PC-3 (cell line): ENCODE measurements at regions of chr3 and their contacts with region 1.

Region 1: DNA sequence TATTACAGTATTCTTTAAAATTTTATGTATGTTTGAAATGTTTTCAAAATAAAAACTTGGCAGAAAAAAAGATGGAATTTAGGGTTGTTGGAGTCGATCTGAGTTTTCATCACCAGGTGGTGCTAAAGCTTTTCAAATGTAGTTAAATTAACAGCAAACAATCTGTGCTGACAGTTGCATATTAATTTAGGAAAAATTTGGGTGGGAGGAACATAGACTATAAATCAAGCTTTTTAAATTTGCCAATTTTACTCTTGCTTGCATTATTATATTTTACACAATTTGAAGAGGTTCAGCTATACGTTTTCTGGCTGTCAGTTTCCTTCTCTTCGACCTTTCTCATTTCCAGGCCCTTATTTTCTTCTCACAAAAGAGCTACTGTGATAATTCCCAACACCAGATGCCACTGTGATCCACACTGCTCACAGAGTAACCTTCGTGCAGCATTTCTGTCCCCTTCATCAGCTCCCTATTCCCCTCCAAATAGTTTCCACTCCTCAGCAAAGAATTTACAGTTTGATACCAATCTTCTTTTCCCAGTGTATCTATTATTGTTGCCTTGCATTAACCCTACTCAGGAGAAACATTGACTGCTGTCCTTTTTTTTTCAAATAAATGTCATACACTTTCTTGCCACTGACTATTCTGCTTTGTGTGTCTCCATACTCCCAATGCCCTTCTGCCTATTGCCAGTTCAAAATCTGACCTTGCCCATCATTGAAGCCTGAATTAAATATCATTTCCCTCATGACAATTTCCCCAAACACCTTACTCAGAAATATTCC is 53.4 kb upstream of the EIF5A2 start:
- DNase-seq: peak; percentile 74
- ATAC-seq: peak; percentile 55
- H3K4me3 ChIP-seq: no peak overlapping the region
- H3K27ac ChIP-seq: no peak overlapping the region
- H3K4me1 ChIP-seq: no peaks in the 10 kb centered on the region
- H3K27me3 ChIP-seq: no peaks in the 10 kb centered on the region
- CTCF ChIP-seq: peak; percentile 91

Region 2: GRCh38 chr3:170726976-170727661 is 234.7 kb before region 1 on chr3:
- CTCF ChIA-PET with region 1: no interaction called
- POLR2A ChIA-PET with region 1: no interaction called
- intact Hi-C with region 1: no loop called
- DNase-seq: peak; percentile 84
- ATAC-seq: peak; percentile 78
- H3K4me3 ChIP-seq: peak overlapping the region; percentile 47
- H3K27ac ChIP-seq: peak overlapping the region; percentile 89
- H3K4me1 ChIP-seq: peaks cover 28% of the 10 kb centered on the region
- H3K27me3 ChIP-seq: no peaks in the 10 kb centered on the region
- CTCF ChIP-seq: no peak

Region 3: GRCh38 chr3:170941551-170941950 is 20.3 kb before region 1 on chr3:
- CTCF ChIA-PET with region 1: no interaction called
- POLR2A ChIA-PET with region 1: no interaction called
- intact Hi-C with region 1: no loop called
- DNase-seq: peak; percentile 50
- ATAC-seq: peak; percentile 93
- H3K4me3 ChIP-seq: no peak overlapping the region
- H3K27ac ChIP-seq: no peak overlapping the region
- H3K4me1 ChIP-seq: peaks cover 6% of the 10 kb centered on the region; the same call in 1 of the 2 replicates
- H3K27me3 ChIP-seq: no peaks in the 10 kb centered on the region
- CTCF ChIP-seq: no peak

Region 4: DNA sequence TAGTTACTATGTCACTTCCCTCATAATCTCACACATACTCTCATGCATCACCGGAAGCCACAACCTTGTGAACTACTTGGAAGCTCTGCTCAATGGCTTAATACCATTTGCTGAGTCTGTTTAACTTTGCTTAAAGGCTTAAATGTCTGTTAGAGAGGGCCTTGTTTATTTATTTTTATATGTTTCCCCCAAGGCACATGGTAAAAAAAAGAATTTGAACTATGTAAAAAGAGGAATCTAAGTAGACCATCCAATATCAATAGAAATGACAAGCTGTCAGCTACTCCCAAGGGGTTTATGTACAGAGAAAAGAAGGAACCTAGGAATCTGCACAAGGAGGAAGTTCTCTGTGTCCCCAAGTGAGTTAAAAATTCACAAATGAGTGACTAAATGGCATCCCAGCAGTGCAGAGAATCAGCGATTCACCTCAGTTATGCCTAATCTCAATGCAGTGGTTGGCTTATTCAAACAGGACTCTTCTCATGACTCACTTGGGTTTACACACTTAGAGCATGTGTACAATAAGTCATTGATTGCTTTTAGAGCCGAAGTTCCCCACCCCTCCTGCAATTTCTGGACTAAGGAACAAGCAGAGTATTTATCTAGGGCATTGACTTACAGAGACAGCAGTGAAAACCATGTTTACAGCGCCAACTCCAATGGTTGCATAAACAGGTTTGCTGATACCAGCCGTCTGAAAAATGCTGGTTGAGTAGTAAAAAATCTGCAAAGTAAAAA is 40.3 kb after region 1 on chr3:
- CTCF ChIA-PET with region 1: no interaction called
- POLR2A ChIA-PET with region 1: no interaction called
- intact Hi-C with region 1: loop called (anchors 2 kb)
- DNase-seq: peak; percentile 94
- ATAC-seq: peak; percentile 90
- H3K4me3 ChIP-seq: peak overlapping the region; percentile 26; the same call in 1 of the 2 replicates
- H3K27ac ChIP-seq: peak overlapping the region; percentile 88
- H3K4me1 ChIP-seq: peaks cover 48% of the 10 kb centered on the region
- H3K27me3 ChIP-seq: no peaks in the 10 kb centered on the region
- CTCF ChIP-seq: no peak

Region 5: GRCh38 chr3:171101982-171102641 is 140.3 kb after region 1 on chr3:
- CTCF ChIA-PET with region 1: no interaction called
- POLR2A ChIA-PET with region 1: no interaction called
- intact Hi-C with region 1: loop called (anchors 5 kb)
- DNase-seq: peak; percentile 66
- ATAC-seq: peak; percentile 88
- H3K4me3 ChIP-seq: no peak overlapping the region
- H3K27ac ChIP-seq: no peak overlapping the region
- H3K4me1 ChIP-seq: peaks cover 10% of the 10 kb centered on the region; the same call in 1 of the 2 replicates
- H3K27me3 ChIP-seq: no peaks in the 10 kb centered on the region
- CTCF ChIP-seq: no peak

Region 6: GRCh38 chr3:171566803-171567422 is 605.1 kb after region 1 on chr3:
- CTCF ChIA-PET with region 1: no interaction called
- POLR2A ChIA-PET with region 1: no interaction called
- intact Hi-C with region 1: loop called (anchors 1 kb)
- DNase-seq: peak; percentile 76
- ATAC-seq: peak; percentile 56; the same call in 1 of the 2 replicates
- H3K4me3 ChIP-seq: no peak overlapping the region
- H3K27ac ChIP-seq: no peak overlapping the region
- H3K4me1 ChIP-seq: peaks cover 23% of the 10 kb centered on the region
- H3K27me3 ChIP-seq: no peaks in the 10 kb centered on the region
- CTCF ChIP-seq: peak; percentile 91

Region 7: DNA sequence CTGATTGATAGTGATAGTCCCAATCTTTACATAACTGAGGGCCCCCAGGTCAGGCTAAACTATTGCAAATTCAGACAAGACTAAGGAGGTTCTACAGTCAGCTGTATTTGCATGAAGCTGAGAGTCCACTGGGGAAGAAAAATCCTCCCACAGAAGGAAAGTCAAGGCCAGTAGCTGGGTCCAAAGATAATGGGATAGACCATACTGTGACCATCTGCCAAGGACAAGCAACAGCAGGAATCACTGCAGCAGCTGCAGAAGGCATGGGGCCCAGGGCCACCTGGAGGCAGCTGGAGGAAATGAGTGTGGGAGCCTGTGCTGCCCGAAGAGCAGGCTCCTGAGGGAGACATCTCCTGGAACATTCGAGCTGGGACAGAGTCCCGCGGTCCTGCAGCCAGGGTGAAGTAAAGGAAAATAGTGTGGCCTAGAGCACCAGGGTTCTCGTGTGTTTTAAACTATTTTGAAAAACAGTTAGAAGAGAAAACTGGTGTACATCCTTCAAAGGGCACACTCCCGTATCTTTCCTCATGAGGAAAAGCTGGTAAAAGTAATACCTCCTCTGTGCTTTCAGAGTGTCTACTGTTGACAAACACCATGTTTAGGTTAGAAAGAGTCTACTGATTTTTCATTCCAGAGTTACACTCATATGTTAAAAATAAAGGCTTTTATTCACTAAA is 868.2 kb after region 1 on chr3:
- CTCF ChIA-PET with region 1: no interaction called
- POLR2A ChIA-PET with region 1: no interaction called
- intact Hi-C with region 1: loop called (anchors 5 kb)
- DNase-seq: peak; percentile 79
- ATAC-seq: peak; percentile 65
- H3K4me3 ChIP-seq: no peak overlapping the region
- H3K27ac ChIP-seq: peak overlapping the region; percentile 33
- H3K4me1 ChIP-seq: peaks cover 45% of the 10 kb centered on the region
- H3K27me3 ChIP-seq: no peaks in the 10 kb centered on the region
- CTCF ChIP-seq: peak; percentile 89